SK-N-SH (cell line): ENCODE measurements at regions of chr17 and their contacts with region 1.

Region 1: DNA sequence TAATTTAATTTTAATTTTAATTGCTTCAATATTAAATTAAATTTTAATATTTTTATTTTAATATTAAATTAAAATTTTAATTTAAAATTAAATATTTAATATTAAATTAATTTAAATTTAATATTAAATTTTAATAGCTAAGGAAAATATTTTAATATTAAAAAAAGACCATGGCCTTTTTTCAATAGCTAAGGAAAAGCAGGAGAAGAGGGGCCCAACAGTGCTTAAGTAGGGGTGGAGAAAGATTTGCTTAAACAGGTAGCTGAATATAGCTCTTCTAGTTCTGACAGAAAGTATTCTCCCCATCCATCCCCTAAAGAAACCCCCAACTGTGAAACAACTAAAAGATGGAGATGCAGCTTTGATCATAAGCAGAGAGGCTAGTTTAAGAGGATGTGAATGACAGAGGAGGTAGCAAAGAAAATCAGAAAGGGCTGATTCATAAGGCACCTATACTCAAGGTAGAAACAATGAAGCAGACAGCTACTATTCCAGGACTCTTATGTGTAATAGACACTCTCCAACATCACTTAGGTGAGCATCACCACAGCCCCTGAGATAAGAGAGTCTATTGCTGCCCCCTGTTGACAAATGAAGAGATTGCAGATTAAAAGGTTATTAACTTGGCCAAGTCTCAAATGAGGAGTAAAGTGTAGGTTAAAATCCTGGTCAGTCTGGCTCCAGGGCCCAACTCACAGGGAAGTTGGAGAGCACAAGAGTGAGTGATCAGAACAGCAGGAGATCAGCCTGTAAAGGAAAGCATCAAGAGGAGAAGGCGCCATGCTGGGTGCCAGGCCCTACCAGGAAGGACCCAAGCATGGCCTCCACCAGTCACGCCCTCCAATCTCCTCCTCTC is 7.8 kb upstream of the RNASEK start:
- DNase-seq: peak; percentile 70
- H3K4me3 ChIP-seq: no peak overlapping the region; a peak in 1 of 4 replicates
- H3K27ac ChIP-seq: no peak overlapping the region
- H3K4me1 ChIP-seq: no peaks in the 10 kb centered on the region
- H3K27me3 ChIP-seq: no peaks in the 10 kb centered on the region
- CTCF ChIP-seq: peak; percentile 81
- EP300 ChIP-seq: no peak
- RAD21 ChIP-seq: peak; percentile 86

Region 2: DNA sequence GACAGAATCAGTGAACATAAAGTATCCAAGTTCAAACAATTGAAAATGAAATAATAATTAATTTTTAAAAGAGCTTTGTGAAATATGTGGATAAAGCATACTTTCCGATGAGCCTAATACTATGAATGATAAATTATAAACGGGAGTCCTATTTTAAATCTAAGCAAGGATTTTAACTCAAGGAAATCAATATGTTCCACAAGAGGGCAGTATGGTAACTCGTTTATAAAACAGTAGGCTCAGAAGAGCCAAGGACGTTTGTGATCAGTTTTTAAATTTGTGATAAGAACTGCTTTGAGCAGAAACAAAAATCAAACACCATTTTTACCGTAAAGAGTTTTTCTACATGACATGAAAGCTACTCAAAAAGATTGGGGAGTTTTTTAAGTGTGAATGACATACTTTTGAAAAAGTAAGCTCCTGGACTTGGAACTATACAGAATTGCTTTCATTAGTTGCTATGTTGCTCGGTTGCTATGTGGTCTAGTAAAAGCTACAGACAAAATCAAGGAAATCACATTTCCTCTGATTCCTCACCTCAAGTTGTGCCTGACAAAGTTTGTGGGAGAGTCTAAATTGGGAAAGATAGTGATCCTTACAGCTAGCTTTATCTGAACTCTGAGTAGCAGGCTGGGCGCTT is 161.3 kb before region 1 on chr17:
- CTCF ChIA-PET with region 1: interaction called, 14 read pairs
- POLR2A ChIA-PET with region 1: no interaction called
- DNase-seq: peak; percentile 26
- H3K4me3 ChIP-seq: no peak overlapping the region
- H3K27ac ChIP-seq: no peak overlapping the region
- H3K4me1 ChIP-seq: no peaks in the 10 kb centered on the region
- H3K27me3 ChIP-seq: peaks cover 54% of the 10 kb centered on the region; the same call in 1 of the 2 replicates
- CTCF ChIP-seq: peak; percentile 74
- EP300 ChIP-seq: no peak
- RAD21 ChIP-seq: peak; percentile 39; the same call in 1 of the 2 replicates

Region 3: GRCh38 chr17:6903326-6903900 is 101.2 kb before region 1 on chr17:
- CTCF ChIA-PET with region 1: interaction called, 72 read pairs
- POLR2A ChIA-PET with region 1: no interaction called
- DNase-seq: no peak
- H3K4me3 ChIP-seq: no peak overlapping the region
- H3K27ac ChIP-seq: no peak overlapping the region
- H3K4me1 ChIP-seq: no peaks in the 10 kb centered on the region
- H3K27me3 ChIP-seq: no peaks in the 10 kb centered on the region
- CTCF ChIP-seq: no peak
- EP300 ChIP-seq: no peak
- RAD21 ChIP-seq: no peak

Region 4: DNA sequence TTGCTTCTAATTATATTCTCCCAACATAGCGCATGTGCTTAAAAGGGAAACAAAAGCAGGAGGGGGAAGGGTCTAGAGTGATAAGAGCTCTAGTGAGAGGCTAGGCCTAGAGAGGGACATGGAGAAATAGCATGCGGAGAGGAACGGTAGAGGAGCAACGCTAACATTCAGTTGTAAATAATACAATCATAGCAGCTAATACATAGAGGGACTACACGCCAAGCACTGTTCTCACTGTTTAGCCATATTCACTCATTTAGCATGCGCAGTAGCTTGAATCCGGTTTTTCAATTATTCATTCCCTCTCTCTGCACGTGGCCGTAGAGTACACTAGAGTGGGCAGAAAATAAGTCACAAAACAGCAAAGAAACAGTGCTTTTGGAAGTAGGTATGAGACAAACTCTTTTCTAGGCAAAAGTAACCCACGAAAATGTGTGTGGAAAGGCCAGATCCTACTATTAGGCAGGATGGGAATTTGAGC is 10.5 kb before region 1 on chr17:
- CTCF ChIA-PET with region 1: interaction called, 11 read pairs
- POLR2A ChIA-PET with region 1: no interaction called
- DNase-seq: no peak
- H3K4me3 ChIP-seq: no peak overlapping the region
- H3K27ac ChIP-seq: no peak overlapping the region
- H3K4me1 ChIP-seq: peaks cover 0 to 3% of the 10 kb centered on the region in 2 experiments; a peak in 1 of 4 replicates
- H3K27me3 ChIP-seq: no peaks in the 10 kb centered on the region
- CTCF ChIP-seq: no peak
- EP300 ChIP-seq: no peak
- RAD21 ChIP-seq: no peak

Region 5: DNA sequence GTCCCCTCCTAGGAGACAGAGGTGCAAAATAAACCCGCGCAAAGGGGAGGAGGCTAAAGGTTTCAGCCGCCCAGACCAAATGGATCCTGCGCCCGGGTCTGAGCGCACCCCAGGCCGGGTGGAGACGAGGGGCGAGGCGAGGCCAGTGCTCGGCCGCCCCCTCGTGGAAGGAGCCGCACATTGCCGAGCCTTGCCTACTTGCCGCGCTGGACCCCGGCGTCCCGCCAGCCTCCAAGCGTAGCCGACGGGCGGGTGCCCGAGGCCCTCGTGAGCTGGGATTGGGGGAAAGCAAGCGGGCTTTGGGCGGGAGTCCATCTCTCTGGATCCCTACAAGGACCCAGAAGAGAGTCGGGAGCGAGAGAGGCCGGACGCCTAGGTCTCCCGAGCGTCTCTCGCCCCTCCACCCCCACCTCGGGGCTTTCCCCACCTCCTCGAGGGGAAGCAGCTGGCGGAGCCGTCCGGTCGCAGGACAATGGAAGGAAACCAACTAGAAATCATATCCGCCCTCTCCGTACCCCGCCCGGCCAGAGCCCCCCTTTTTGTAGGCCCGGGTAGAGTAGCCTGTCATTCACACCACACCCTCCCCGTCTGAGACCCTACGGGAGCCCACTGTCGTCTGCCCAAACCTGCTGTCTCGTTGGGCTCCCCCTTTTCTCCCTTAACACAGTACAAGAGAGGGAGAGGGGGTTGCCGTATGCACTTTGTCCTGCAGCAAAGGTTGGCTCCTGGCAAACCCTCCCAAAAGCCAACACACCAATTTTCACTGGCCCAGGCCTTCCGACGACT is 17.6 kb after region 1 on chr17:
- CTCF ChIA-PET with region 1: interaction called, 41 read pairs
- POLR2A ChIA-PET with region 1: no interaction called
- DNase-seq: peak; percentile 92
- H3K4me3 ChIP-seq: peak overlapping the region in 1 of 2 experiments; percentile 47; a peak in 2 of 4 replicates
- H3K27ac ChIP-seq: no peak overlapping the region
- H3K4me1 ChIP-seq: peaks cover 5 to 30% of the 10 kb centered on the region in 2 experiments; a peak in 2 of 4 replicates
- H3K27me3 ChIP-seq: no peaks in the 10 kb centered on the region
- CTCF ChIP-seq: peak; percentile 81
- EP300 ChIP-seq: no peak
- RAD21 ChIP-seq: peak; percentile 74

Region 6: GRCh38 chr17:7156342-7156940 is 151.8 kb after region 1 on chr17:
- CTCF ChIA-PET with region 1: no interaction called
- POLR2A ChIA-PET with region 1: no interaction called
- DNase-seq: no peak
- H3K4me3 ChIP-seq: no peak overlapping the region
- H3K27ac ChIP-seq: no peak overlapping the region
- H3K4me1 ChIP-seq: no peaks in the 10 kb centered on the region
- H3K27me3 ChIP-seq: peaks cover 88% of the 10 kb centered on the region
- CTCF ChIP-seq: no peak
- EP300 ChIP-seq: no peak
- RAD21 ChIP-seq: no peak